ENCODE measurements at regions of chr4 and their contacts with region 1.

Region 1: GRCh38 chr4:153466081-153466948 is at the start of gene TMEM131L:
- DNase-seq: peak; percentile 85

Region 2: GRCh38 chr4:153393397-153393796 is 72.9 kb before region 1 on chr4:
- CTCF ChIA-PET with region 1: no interaction called
- POLR2A ChIA-PET with region 1: no interaction called
- DNase-seq: no peak

Region 3: DNA sequence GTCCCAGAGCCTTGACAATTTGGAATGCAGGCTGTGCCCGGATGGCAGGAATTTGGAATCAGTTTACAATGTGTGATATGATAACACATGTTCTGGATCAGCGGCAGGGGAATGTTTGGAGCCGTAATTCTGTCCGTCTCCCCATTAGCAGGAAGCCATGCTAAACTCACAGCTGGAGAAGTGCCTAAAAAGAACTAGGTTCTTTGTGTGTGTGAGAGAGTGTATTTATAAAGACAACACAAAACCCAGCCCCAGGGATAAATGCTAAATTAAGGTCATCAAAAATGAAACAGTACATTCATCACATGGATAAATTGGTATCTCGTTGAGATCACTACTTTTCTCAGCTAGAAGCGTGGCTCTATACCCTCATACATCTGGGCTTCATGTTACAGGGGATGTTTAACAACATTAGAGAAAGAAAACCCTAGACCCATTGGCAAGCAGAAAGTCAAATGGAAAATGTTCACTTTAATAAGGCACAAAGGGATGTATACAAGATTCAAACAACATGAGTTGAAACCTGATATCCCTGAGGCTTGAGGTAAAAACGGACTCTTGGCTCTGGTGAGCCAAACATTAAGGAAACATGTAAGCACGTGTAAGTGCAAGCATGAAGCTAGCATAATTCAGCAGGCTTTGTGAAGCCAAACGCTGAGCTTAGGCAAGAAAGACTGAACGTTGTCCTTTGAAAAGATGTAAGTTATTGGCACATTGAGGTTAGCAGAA is 18.1 kb before region 1 on chr4:
- CTCF ChIA-PET with region 1: interaction called, 13 read pairs
- POLR2A ChIA-PET with region 1: interaction called, 42 read pairs
- DNase-seq: peak; percentile 31

Region 4: DNA sequence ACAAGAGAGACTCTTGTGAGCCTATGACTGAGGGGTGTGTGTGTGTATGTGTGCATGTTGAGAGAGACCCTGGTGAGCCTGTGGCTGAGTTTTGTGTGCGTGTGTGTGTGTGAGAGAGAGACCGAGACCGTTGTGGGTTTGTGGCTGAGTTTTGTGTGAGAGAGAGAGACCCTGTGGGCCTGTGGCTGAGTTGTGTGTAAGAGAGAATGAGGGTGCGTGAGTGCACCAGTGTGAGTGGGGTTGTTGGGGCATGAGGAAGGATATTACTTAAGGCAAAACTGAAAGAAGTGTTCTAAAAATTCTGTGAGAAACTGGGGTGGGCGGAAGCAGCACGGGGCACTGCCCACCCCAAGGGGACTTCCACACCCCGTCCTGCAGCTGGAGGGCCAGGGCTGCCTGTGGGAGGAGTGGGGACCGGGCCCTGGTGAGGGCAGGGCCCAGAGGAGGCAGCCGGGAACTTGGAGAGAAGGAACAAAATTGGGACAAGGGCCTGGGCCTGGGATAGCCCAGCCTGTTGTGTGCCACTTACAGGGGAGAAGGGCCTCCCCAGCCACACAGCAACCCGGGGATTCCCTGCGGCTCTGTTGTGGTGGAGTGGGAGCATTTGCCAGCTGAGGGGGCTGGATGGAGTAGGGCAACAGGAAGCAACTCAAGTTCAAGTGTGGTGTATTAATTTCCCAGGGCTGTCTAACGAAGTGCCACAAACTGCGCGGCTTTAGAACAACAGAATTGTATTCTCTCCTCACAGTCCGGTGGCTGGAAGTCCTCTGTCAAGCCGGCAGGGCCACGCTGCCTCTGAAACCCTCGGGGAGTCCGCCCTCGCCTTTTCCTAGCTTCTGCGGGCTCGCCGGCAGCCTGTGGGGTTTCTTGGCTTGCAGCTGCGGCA is 21.9 kb after region 1 on chr4:
- CTCF ChIA-PET with region 1: interaction called, 3 read pairs
- POLR2A ChIA-PET with region 1: interaction called, 38 read pairs
- DNase-seq: no peak

Region 5: GRCh38 chr4:153531000-153531358 is 64.7 kb after region 1 on chr4:
- CTCF ChIA-PET with region 1: interaction called, 3 read pairs
- POLR2A ChIA-PET with region 1: interaction called, 11 read pairs
- DNase-seq: no peak